Heart left ventricle (tissue), 16 donors: ENCODE measurements at regions of chr22 and their contacts with region 1.

Region 1: DNA sequence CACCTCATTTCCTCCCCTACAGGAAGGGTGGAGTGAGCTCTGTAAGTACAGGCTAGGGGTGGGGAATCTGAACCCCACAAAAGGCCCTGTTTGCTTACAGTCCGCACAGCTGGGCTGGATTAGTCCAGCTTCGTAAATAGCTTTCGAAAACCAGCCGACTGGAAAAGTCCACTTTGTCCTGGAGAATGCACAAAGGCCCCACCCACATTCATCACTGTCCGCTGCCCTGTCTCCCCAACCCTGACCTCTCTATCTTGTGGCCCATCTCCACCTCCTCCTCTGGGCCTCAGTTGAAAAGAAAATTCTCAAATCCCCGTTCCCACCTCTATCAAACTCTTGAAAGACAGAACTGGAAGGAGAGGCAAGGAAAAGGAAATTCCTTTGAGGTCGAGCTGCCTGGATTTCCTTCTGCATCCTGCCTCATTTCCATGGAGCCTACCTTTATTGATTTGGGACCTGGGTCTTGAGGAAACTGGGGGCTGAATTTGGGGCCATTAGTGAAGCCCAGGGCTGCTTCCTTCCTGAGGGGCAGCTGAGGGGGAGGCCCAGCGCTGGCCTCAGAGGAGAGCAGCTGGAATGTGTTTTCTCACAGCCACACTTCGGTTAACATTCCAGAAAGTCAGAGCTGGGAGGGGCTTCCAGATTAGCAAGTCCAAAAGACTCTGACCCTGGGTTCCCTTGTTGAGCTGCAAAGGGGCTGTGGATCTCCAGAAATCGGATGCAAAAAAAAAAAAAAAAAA is 147.6 kb downstream of the FBXO7 start:
- DNase-seq: peak in 4 of 5 donors; percentile 58 to 76 (median 74)
- ATAC-seq: peak; percentile 49 to 66 (median 62)
- H3K4me3 ChIP-seq: no peak overlapping the region
- H3K27ac ChIP-seq: peak overlapping the region; percentile 76 to 98 (median 90)
- H3K4me1 ChIP-seq: peaks cover 17 to 90% (median 64%) of the 10 kb centered on the region in 12 donors
- H3K27me3 ChIP-seq: no peaks in the 10 kb centered on the region
- CTCF ChIP-seq: no peak
- POLR2A ChIP-seq: no peak

Region 2: GRCh38 chr22:32119568-32120235 is 502.5 kb before region 1 on chr22:
- intact Hi-C with region 1: no loop called
- DNase-seq: no peak
- ATAC-seq: peak; percentile 18 to 39 (median 32)
- H3K4me3 ChIP-seq: no peak overlapping the region
- H3K27ac ChIP-seq: no peak overlapping the region
- H3K4me1 ChIP-seq: peaks cover 0 to 3% (median 0%) of the 10 kb centered on the region in 12 donors
- H3K27me3 ChIP-seq: no peaks in the 10 kb centered on the region
- CTCF ChIP-seq: no peak
- POLR2A ChIP-seq: no peak

Region 3: DNA sequence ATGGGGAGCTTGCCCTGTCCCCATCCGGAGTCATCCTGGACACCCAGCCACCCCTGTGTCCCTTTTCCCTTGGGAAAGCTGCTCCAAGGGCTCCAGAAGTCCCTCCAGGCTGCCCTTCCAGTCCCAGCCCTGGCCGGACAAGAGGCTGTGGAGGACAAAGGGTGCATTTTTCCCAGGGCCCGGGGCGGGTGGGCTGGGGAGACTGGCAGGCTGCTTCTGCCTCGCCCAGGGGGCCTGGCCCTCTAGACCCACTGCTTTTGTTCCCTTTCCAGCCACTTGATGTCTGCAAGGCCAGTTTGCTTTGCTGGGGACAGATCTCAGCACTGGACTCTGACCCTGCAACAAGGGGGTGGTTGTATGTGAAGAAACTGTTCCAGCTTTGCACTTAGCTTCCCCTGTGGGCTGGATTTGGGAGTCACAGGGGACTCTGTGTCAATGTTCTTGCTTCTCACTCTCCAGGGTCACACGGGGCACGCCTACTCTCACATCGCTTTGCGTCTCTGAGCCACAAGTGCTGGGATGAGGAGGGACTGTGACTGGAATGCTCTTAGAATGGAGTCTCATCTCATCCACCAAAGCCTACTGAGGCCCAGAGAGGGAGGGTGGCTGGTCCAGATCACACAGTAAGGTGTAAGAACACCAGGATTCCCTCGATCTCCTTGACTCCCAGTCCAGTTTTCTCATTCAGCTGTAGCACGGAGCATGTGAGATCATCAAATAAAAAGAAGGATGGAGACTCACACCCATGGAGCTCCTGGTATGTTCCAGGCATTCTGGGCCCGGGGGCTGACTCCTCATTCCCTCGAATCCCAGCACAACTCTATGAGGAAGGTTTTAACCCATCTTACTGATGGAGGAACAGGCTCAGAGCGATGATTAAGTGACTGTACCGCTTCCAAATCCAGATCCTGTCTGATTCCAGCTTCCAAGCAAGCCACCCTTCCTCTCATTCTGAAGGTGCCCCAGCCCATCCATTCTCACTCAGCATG is 87.6 kb before region 1 on chr22:
- intact Hi-C with region 1: loop called in 8 of 10 experiments (anchors 1 to 5 kb)
- DNase-seq: peak; percentile 61 to 85 (median 75)
- ATAC-seq: peak; percentile 1 to 32 (median 23)
- H3K4me3 ChIP-seq: no peak overlapping the region
- H3K27ac ChIP-seq: peak overlapping the region; percentile 50 to 94 (median 82)
- H3K4me1 ChIP-seq: peaks cover 5 to 65% (median 49%) of the 10 kb centered on the region in 12 donors
- H3K27me3 ChIP-seq: no peaks in the 10 kb centered on the region
- CTCF ChIP-seq: no peak
- POLR2A ChIP-seq: no peak

Region 4: GRCh38 chr22:32539631-32540421 is 82.3 kb before region 1 on chr22:
- intact Hi-C with region 1: loop called in 4 of 10 experiments (anchors 2 to 5 kb)
- DNase-seq: peak in 4 of 5 donors; percentile 39 to 75 (median 63)
- ATAC-seq: peak; percentile 41 to 87 (median 48)
- H3K4me3 ChIP-seq: no peak overlapping the region
- H3K27ac ChIP-seq: peak overlapping the region in 11 of 12 donors; percentile 30 to 77 (median 68)
- H3K4me1 ChIP-seq: peaks cover 0 to 48% (median 26%) of the 10 kb centered on the region in 12 donors
- H3K27me3 ChIP-seq: no peaks in the 10 kb centered on the region
- CTCF ChIP-seq: no peak
- POLR2A ChIP-seq: no peak

Region 5: DNA sequence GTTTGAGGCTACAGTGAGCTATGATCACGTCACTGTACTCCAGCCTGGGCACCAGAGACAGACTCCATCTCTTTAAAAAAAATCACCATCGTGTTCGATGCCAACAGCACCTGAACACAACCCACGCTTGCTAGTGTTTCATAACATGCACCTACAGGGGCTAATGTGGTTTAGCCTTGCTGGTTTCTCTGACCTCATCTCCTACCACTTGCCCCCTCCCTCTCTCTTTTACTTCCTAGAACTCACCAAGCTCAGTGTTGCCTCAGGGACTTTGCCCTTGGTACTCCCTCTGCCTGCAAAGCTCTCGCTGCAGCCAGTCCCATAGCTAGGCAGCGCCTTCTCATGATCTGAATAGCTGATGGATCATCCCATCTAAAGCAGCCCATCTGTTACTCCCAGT is 47.8 kb before region 1 on chr22:
- intact Hi-C with region 1: loop called in 1 of 10 experiments (anchors 5 kb)
- DNase-seq: no peak
- ATAC-seq: no peak
- H3K4me3 ChIP-seq: no peak overlapping the region
- H3K27ac ChIP-seq: peak overlapping the region in 5 of 12 donors; percentile 11 to 48 (median 41)
- H3K4me1 ChIP-seq: peaks cover 0 to 12% (median 0%) of the 10 kb centered on the region in 12 donors
- H3K27me3 ChIP-seq: no peaks in the 10 kb centered on the region
- CTCF ChIP-seq: no peak
- POLR2A ChIP-seq: no peak

Region 6: DNA sequence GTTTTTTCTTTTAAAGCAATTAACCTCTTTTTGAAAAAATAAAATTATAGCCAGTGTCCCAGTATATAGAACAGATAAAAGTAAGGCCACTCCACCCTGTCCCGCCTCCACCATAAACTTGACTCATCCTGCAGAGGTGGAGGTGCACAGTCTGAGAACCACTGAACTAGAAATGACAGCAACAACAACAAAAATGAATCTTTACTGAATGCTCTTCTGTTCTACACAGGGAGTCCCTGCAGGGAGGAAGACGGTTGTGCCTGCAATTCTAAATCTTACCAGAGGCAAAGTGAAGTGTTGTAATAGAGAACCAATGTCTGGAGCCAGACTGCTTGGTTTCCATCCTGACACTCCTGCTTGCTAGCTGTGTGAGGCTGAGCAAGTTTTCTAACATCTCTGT is 14.7 kb after region 1 on chr22:
- intact Hi-C with region 1: no loop called
- DNase-seq: no peak
- ATAC-seq: no peak
- H3K4me3 ChIP-seq: no peak overlapping the region
- H3K27ac ChIP-seq: no peak overlapping the region
- H3K4me1 ChIP-seq: peaks cover 0 to 10% (median 0%) of the 10 kb centered on the region in 12 donors
- H3K27me3 ChIP-seq: no peaks in the 10 kb centered on the region
- CTCF ChIP-seq: no peak
- POLR2A ChIP-seq: no peak

Region 7: GRCh38 chr22:32695451-32695891 is 73.3 kb after region 1 on chr22:
- intact Hi-C with region 1: loop called in 2 of 10 experiments (anchors 1 to 5 kb)
- DNase-seq: no peak
- ATAC-seq: no peak
- H3K4me3 ChIP-seq: no peak overlapping the region
- H3K27ac ChIP-seq: no peak overlapping the region
- H3K4me1 ChIP-seq: peaks cover 0 to 26% (median 10%) of the 10 kb centered on the region in 12 donors
- H3K27me3 ChIP-seq: no peaks in the 10 kb centered on the region
- CTCF ChIP-seq: no peak
- POLR2A ChIP-seq: no peak